ENCODE measurements at regions of chr6 and their contacts with region 1.

Region 1: DNA sequence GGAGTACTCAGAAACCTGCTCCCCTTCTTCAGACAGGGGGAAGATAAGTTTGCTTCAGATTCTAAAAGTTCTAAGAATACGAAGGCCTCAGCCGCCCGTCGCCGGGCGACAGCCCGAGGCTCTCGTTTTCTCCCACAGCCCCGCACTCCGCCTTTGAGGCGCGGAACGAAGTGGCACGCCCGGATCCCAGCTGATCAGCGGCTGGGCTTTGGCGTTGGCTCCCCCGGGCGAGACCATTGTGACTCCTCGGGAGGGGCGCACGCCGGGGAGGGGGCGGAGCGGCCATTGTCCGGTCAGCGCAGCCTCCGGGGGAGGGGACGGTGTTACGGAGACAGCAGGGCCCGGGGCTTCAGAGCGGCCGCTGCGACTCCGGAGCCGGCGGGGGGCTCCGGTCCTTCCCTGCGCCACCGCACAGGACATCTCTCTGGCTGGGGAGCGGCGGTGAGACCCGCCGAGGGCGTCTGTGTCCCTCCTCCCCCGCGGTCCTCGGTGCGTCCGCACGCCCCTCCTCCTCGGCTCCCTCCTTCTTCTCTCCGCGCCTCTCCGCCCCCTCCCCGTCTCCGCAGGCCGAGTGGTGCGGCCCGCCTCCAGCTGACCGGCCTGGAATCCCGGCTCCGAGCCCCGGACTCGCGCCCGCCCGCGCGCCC is at the start of gene ZFAND3:
- DNase-seq: peak; percentile 93

Region 2: GRCh38 chr6:37807656-37808055 is 11.6 kb before region 1 on chr6:
- CTCF ChIA-PET with region 1: interaction called, 5 read pairs
- POLR2A ChIA-PET with region 1: interaction called, 19 read pairs
- DNase-seq: no peak

Measured in HEK293T (cell line).